ENCODE measurements at regions of chr1 and their contacts with region 1.

Region 1: DNA sequence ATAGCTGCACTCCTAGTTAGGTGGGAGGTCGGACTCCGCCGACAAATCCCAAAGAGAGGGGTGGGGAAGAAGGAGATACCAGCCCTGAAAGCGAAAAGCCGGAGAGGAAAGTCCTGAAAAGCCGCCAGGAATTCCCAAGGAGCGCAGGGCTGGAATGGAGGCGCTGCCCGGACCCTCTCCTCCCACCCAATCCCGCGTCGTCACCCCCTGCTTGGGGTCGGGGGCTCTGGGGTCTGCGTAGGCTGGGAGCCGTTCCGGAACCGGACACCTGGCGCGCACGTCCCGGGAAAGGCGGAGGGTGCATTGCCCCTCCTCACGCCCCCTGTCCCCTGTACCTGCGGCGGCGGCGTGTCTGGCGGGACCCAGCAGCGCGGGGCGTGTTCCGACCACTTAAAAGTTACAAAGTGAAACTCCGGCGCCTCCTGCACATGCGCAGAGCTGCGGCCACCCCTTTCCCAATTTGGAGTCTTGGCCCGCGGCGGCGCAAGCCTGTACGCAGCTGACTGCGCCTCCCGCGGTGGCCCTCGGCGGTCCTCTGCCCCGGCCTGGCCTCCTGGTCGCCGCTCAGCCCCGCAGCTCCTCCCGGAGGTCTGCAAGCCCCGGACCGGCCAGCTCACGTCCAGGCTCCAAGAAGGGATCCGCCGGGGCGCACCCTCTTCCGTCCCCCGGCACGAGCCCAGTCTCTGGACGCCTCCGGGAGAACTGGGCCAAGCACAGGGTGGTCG is at the start of gene TMEM63A:
- DNase-seq: peak; percentile 40
- ATAC-seq: peak; percentile 88
- H3K4me3 ChIP-seq: peak within 1 kb of the TSS; percentile 88
- H3K27ac ChIP-seq: peak within 1 kb of the TSS; percentile 77
- H3K4me1 ChIP-seq: peaks cover 30% of the 10 kb centered on the region
- H3K27me3 ChIP-seq: no peaks in the 10 kb centered on the region
- CTCF ChIP-seq: peak; percentile 31 to 42 (median 40); a peak in 5 of 6 replicates
- EP300 ChIP-seq: no peak
- POLR2A ChIP-seq: peak; percentile 81
- RAD21 ChIP-seq: no peak
- polyA plus RNA-seq, gene TMEM63A: 1.3 to 1.8 TPM

Region 2: GRCh38 chr1:225845571-225846259 is 36.4 kb before region 1 on chr1:
- CTCF ChIA-PET with region 1: interaction called, 4 read pairs
- POLR2A ChIA-PET with region 1: interaction called, 8 read pairs
- RAD21 ChIA-PET with region 1: interaction called, 13 read pairs
- SMC1A ChIA-PET with region 1: interaction called, 9 read pairs
- in situ Hi-C with region 1: no loop called
- intact Hi-C with region 1: no loop called
- DNase-seq: no peak
- ATAC-seq: peak; percentile 36
- H3K4me3 ChIP-seq: no peak overlapping the region
- H3K27ac ChIP-seq: no peak overlapping the region
- H3K4me1 ChIP-seq: peaks cover 34% of the 10 kb centered on the region
- H3K27me3 ChIP-seq: no peaks in the 10 kb centered on the region
- CTCF ChIP-seq: peak; percentile 43 to 59 (median 47)
- EP300 ChIP-seq: no peak
- POLR2A ChIP-seq: peak; percentile 27
- RAD21 ChIP-seq: peak; percentile 68

Region 3: DNA sequence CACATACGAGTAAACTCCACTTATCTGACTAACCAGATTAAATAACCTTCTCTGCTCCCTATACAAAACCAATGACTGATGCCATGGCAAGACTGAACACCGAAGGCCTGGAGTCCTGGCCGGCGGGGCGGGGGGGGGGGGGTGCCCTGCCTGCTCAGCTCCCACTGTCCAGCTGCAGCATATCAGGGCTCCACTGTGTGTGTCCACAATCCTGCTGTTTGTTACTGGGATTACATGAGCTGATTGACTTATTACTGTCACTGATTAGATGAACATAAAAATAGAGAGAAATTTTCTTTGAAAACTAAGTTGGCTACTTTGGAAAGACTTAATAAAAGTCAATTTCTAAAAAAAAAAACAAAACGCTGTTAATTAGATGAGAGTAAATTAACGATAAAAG is 24.9 kb before region 1 on chr1:
- CTCF ChIA-PET with region 1: interaction called, 5 read pairs
- POLR2A ChIA-PET with region 1: interaction called, 5 read pairs
- RAD21 ChIA-PET with region 1: interaction called, 3 read pairs
- SMC1A ChIA-PET with region 1: interaction called, 10 read pairs
- in situ Hi-C with region 1: no loop called
- intact Hi-C with region 1: no loop called
- DNase-seq: no peak
- ATAC-seq: no peak
- H3K4me3 ChIP-seq: no peak overlapping the region
- H3K27ac ChIP-seq: no peak overlapping the region
- H3K4me1 ChIP-seq: peaks cover 13% of the 10 kb centered on the region
- H3K27me3 ChIP-seq: no peaks in the 10 kb centered on the region
- CTCF ChIP-seq: no peak
- EP300 ChIP-seq: no peak
- POLR2A ChIP-seq: no peak
- RAD21 ChIP-seq: no peak

Region 4: GRCh38 chr1:225896937-225897549 is 14.9 kb after region 1 on chr1:
- CTCF ChIA-PET with region 1: interaction called, 40 read pairs
- POLR2A ChIA-PET with region 1: interaction called, 21 read pairs
- RAD21 ChIA-PET with region 1: interaction called, 24 read pairs
- SMC1A ChIA-PET with region 1: interaction called, 9 read pairs
- in situ Hi-C with region 1: no loop called
- intact Hi-C with region 1: loop called (anchors 1 kb)
- DNase-seq: peak; percentile 90
- ATAC-seq: peak; percentile 100
- H3K4me3 ChIP-seq: no peak overlapping the region
- H3K27ac ChIP-seq: peak overlapping the region; percentile 80
- H3K4me1 ChIP-seq: peaks cover 20% of the 10 kb centered on the region
- H3K27me3 ChIP-seq: no peaks in the 10 kb centered on the region
- CTCF ChIP-seq: peak in 1 of 3 experiments; percentile 11; a peak in 1 of 6 replicates
- EP300 ChIP-seq: peak; percentile 51 to 61; a peak in 3 of 4 replicates
- POLR2A ChIP-seq: peak; percentile 69
- RAD21 ChIP-seq: no peak

Region 5: GRCh38 chr1:225911191-225912130 is 29.3 kb after region 1 on chr1:
- CTCF ChIA-PET with region 1: interaction called, 13 read pairs
- POLR2A ChIA-PET with region 1: no interaction called
- RAD21 ChIA-PET with region 1: no interaction called
- SMC1A ChIA-PET with region 1: interaction called, 16 read pairs
- in situ Hi-C with region 1: no loop called
- intact Hi-C with region 1: no loop called
- DNase-seq: no peak
- ATAC-seq: peak; percentile 97
- H3K4me3 ChIP-seq: no peak overlapping the region
- H3K27ac ChIP-seq: no peak overlapping the region
- H3K4me1 ChIP-seq: peaks cover 4% of the 10 kb centered on the region; the same call in 1 of the 2 replicates
- H3K27me3 ChIP-seq: no peaks in the 10 kb centered on the region
- CTCF ChIP-seq: peak; percentile 78 to 81 (median 78)
- EP300 ChIP-seq: no peak
- POLR2A ChIP-seq: no peak
- RAD21 ChIP-seq: peak; percentile 81

Region 6: GRCh38 chr1:225923692-225924555 is 41.8 kb after region 1 on chr1 and contains the start of gene PYCR2:
- CTCF ChIA-PET with region 1: interaction called, 4 read pairs
- POLR2A ChIA-PET with region 1: interaction called, 11 read pairs
- RAD21 ChIA-PET with region 1: interaction called, 16 read pairs
- SMC1A ChIA-PET with region 1: interaction called, 3 read pairs
- in situ Hi-C with region 1: no loop called
- intact Hi-C with region 1: no loop called
- DNase-seq: peak; percentile 79
- ATAC-seq: peak; percentile 98
- H3K4me3 ChIP-seq: peak within 1 kb of the TSS; percentile 94
- H3K27ac ChIP-seq: peak within 1 kb of the TSS; percentile 96
- H3K4me1 ChIP-seq: peaks cover 7% of the 10 kb centered on the region
- H3K27me3 ChIP-seq: no peaks in the 10 kb centered on the region
- CTCF ChIP-seq: no peak
- EP300 ChIP-seq: no peak
- POLR2A ChIP-seq: peak; percentile 96
- RAD21 ChIP-seq: no peak
- polyA plus RNA-seq, gene PYCR2: 1.7 to 5.9 TPM

Region 7: DNA sequence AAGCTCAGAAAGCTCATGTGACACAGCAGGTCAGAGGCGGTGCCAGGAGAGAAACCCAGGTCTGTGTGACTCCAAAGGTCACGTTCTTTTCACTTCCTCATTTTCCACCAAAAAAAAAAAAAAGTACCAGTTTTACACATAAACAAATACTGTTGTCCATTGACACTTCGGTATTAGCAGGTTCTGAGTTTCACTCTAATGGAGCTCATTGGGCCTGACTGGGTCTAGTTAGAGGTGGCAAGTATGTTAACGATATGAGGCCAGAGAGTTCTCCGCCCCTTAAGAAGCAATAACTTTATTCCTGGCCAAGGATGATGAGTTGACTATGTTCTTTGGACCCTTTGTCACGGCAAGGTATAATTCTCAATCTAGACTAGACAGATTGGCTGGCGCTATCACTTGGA is 147.0 kb after region 1 on chr1:
- CTCF ChIA-PET with region 1: no interaction called
- POLR2A ChIA-PET with region 1: interaction called, 15 read pairs
- RAD21 ChIA-PET with region 1: no interaction called
- SMC1A ChIA-PET with region 1: no interaction called
- in situ Hi-C with region 1: no loop called
- intact Hi-C with region 1: no loop called
- DNase-seq: peak; percentile 59
- ATAC-seq: peak; percentile 93
- H3K4me3 ChIP-seq: no peak overlapping the region
- H3K27ac ChIP-seq: peak overlapping the region; percentile 36
- H3K4me1 ChIP-seq: peaks cover 26% of the 10 kb centered on the region
- H3K27me3 ChIP-seq: no peaks in the 10 kb centered on the region
- CTCF ChIP-seq: no peak
- EP300 ChIP-seq: peak; percentile 81 to 83
- POLR2A ChIP-seq: no peak
- RAD21 ChIP-seq: no peak

Measured in GM12878 (cell line).